Ascending aorta (tissue), 2 donors: ENCODE measurements at regions of chr3 and their contacts with region 1.

Region 1: DNA sequence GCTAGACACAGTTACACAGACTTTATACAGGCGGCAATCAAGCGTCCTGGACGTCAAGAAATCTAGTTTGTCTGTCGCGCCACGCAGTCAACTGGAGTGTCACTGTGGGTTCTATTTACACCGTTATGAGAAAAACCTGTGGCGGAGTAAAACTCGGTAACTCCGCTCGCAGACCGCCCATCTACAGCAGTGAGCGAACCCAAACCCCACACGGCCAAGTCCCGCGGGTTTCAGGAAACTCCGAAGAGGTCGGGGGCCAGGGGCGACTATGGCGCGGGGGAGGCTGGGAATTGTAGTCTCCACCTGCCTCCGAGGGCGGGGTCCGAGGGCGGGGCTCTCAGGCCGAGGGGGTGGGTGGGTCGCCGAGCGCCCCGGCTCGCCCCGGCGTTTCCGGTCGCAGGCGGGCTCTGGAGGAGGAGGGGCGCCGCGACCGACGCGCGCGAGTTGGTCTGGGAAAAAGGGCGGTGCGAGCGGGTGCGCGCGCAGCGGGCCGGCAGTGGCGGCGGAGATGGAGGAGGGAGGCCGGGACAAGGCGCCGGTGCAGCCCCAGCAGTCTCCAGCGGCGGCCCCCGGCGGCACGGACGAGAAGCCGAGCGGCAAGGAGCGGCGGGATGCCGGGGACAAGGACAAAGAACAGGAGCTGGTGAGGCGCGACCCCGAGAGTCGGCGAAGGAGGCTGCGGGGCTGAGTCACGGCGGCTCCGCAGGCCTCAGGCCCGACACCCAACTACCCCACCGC is at the start of gene PSMD2:
- DNase-seq: peak; percentile 84 to 99
- H3K4me3 ChIP-seq: peak within 1 kb of the TSS; percentile 75 to 78
- H3K27ac ChIP-seq: peak within 1 kb of the TSS; percentile 73 to 76
- H3K4me1 ChIP-seq: no peaks in the 10 kb centered on the region
- H3K27me3 ChIP-seq: no peaks in the 10 kb centered on the region
- CTCF ChIP-seq: peak in 1 of 3 experiments; percentile 18
- total RNA-seq, gene PSMD2: 151 TPM

Region 2: DNA sequence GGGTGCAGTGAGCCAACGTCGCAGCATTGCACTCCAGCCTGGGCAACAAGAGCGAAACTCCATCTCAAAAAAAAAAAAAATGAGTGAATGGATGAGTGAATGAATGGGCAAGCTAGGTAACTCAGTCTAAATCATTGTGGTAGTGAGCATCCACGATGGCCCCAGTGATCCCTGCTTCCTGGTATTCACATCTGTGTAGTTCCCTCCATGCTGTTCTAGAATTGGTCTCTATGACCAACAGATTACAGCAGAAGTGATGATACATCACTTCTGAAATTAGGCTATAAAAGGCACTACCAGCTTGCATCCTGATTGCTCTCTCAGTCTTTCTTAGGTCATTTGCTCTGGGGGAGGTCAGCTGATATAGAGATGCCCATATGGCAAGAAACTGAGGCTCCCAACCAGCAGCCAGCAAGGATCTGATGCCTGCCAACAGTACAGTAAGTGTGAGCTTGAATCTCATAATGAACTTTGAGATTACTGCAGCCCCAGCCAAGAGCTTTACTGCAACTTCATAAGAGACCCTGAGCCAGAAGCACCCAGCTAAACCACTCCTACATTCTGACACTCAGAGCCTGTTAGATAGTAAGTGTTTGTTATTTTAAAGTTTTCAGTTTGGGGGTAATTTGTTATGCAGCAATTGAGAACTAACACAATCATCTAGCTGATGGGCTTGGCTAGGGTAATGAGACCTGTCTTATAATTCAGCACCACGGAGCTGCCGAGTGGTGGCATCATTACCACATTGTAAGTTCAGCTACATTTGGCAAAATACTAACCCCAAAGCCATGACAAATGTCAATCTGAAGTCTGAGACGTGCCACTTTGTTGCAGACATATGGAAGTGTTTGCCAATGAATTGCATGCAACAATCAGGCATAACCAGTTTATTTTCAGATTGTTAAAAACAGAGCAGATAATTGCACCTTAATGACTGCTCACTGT is 796.4 kb before region 1 on chr3:
- intact Hi-C with region 1: no loop called
- DNase-seq: no peak
- H3K4me3 ChIP-seq: no peak overlapping the region
- H3K27ac ChIP-seq: no peak overlapping the region
- H3K4me1 ChIP-seq: no peaks in the 10 kb centered on the region
- H3K27me3 ChIP-seq: no peaks in the 10 kb centered on the region
- CTCF ChIP-seq: no peak

Region 3: GRCh38 chr3:183794452-183794851 is 504.5 kb before region 1 on chr3:
- intact Hi-C with region 1: no loop called
- DNase-seq: no peak
- H3K4me3 ChIP-seq: no peak overlapping the region
- H3K27ac ChIP-seq: no peak overlapping the region
- H3K4me1 ChIP-seq: no peaks in the 10 kb centered on the region
- H3K27me3 ChIP-seq: no peaks in the 10 kb centered on the region
- CTCF ChIP-seq: no peak

Region 4: DNA sequence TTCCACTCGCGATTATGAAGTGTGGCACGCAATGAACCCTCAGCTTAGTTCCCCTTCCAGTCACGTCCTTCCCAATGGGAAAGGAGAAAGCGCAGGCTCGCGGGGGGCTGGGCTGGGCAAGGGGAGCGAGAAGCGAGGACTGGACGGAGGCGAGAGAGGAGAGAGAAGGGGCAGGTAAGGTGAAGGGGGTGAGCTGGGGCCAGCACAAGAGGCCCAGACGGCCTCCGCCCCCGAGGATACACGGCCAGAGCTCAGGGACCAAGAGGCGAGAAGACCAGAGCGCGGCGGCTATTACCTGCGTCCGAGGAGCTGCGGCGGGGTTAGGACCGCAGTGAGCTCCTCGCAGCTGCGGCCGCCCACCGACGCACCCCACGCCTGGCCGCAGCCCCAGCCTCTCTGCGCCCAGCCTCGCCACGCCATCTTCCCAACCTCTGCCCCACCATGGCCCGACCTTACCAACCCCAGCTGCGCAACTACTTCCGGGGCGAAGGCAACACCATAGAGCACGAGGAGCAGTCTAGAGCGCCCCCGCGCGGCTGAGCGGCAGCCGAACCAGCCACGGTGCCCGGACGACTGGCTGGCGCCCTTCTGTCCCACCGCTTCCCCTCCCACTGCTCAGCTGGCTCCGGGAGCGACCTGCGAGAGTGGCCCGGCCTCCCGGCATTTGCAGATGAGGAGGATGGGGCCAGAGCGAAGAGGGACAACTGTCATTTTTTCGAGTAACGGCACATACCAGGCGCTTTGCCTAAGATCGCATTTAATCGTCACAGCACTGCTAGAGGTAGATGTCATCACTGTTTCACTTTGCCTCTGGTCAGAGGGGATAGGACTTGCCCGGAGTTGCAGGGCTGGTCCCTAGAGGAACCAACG is 414.3 kb before region 1 on chr3 and contains the start of gene PARL:
- intact Hi-C with region 1: loop called (anchors 5 kb)
- DNase-seq: peak; percentile 80 to 98
- H3K4me3 ChIP-seq: peak within 1 kb of the TSS; percentile 89 to 90
- H3K27ac ChIP-seq: peak within 1 kb of the TSS; percentile 75 to 81
- H3K4me1 ChIP-seq: peaks cover 0 to 21% of the 10 kb centered on the region in 2 donors
- H3K27me3 ChIP-seq: no peaks in the 10 kb centered on the region
- CTCF ChIP-seq: peak; percentile 89 to 92 (median 92)
- total RNA-seq, gene PARL: 14.3 TPM

Region 5: GRCh38 chr3:184135149-184135910 is 163.6 kb before region 1 on chr3 and contains the start of gene EIF2B5:
- intact Hi-C with region 1: loop called (anchors 1 kb)
- DNase-seq: peak; percentile 71 to 96
- H3K4me3 ChIP-seq: peak within 1 kb of the TSS; percentile 74 to 91
- H3K27ac ChIP-seq: peak within 1 kb of the TSS; percentile 90 to 91
- H3K4me1 ChIP-seq: peaks cover 3 to 9% of the 10 kb centered on the region in 2 donors
- H3K27me3 ChIP-seq: no peaks in the 10 kb centered on the region
- CTCF ChIP-seq: peak in 2 of 3 experiments; percentile 44 to 51
- total RNA-seq, gene EIF2B5: 24.7 TPM

Region 6: GRCh38 chr3:184168363-184169120 is 130.4 kb before region 1 on chr3:
- intact Hi-C with region 1: no loop called
- DNase-seq: no peak
- H3K4me3 ChIP-seq: no peak overlapping the region
- H3K27ac ChIP-seq: no peak overlapping the region
- H3K4me1 ChIP-seq: no peaks in the 10 kb centered on the region
- H3K27me3 ChIP-seq: no peaks in the 10 kb centered on the region
- CTCF ChIP-seq: no peak

Region 7: GRCh38 chr3:184185461-184186308 is 113.2 kb before region 1 on chr3 and contains the start of gene ABCF3:
- intact Hi-C with region 1: loop called (anchors 1 kb)
- DNase-seq: peak; percentile 98 to 100
- H3K4me3 ChIP-seq: peak within 1 kb of the TSS; percentile 91 to 97
- H3K27ac ChIP-seq: peak within 1 kb of the TSS; percentile 87 to 93
- H3K4me1 ChIP-seq: peaks cover 0 to 16% of the 10 kb centered on the region in 2 donors
- H3K27me3 ChIP-seq: no peaks in the 10 kb centered on the region
- CTCF ChIP-seq: no peak
- total RNA-seq, gene ABCF3: 93.3 TPM

Region 8: GRCh38 chr3:184314363-184314699 is 15.4 kb after region 1 on chr3 and contains the start of gene EIF4G1:
- intact Hi-C with region 1: loop called (anchors 1 kb)
- DNase-seq: peak; percentile 78 to 96
- H3K4me3 ChIP-seq: peak within 1 kb of the TSS; percentile 76 to 79
- H3K27ac ChIP-seq: peak within 1 kb of the TSS; percentile 95 to 98
- H3K4me1 ChIP-seq: peaks cover 17 to 33% of the 10 kb centered on the region in 2 donors
- H3K27me3 ChIP-seq: no peaks in the 10 kb centered on the region
- CTCF ChIP-seq: no peak
- total RNA-seq, gene EIF4G1: 192 TPM

Region 9: DNA sequence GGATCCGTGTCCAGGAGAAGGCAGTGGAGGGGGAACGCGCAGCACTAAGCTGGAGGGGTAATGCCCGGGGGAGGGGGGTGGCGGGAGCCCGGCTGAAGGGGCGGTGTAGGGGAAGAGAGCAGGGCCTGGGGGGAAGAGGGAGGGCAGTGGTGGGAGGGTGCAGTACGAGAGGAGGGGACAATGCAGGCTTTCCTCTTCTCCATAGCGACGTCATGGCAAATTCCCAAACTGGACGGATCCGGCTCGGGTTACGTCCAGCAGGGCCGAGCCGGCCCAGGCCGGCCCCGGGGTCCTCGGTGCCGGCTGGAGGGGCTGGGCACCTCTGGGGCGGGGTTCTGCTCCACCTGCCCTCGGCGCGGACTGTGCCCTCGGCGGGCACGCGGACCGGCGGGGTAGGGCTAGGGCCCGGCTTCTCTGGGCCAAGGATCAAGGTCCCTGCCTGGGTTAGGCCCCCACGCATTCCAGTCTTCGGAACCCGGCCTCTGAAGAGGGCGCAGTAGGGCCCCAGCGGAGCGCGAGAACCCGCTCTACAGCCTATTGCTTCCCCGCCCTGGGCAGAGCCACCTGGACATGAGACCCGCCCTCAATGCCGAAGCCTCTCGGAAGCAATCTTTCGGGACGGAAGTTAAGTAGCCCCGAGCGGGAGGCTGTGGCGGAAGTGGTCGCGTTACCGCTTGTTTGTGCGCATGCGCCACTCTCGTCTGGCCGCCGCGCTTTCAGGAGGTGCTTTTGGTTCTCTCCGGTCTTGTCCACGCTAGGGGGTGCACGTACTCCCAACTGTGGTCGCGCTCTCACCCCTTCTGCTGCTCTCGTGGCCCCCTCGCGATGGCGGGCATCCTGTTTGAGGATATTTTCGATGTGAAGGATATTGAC is 64.0 kb after region 1 on chr3:
- intact Hi-C with region 1: loop called (anchors 1 kb)
- DNase-seq: peak; percentile 79 to 98
- H3K4me3 ChIP-seq: peak overlapping the region; percentile 64 to 78
- H3K27ac ChIP-seq: peak overlapping the region; percentile 99 to 100
- H3K4me1 ChIP-seq: peaks cover 5 to 15% of the 10 kb centered on the region in 2 donors
- H3K27me3 ChIP-seq: no peaks in the 10 kb centered on the region
- CTCF ChIP-seq: peak in 2 of 3 experiments; percentile 56 to 68